ENCODE measurements at regions of chr20 and their contacts with region 1.

Region 1: GRCh38 chr20:54219751-54220426 is 12.0 kb downstream of the PFDN4 start:
- DNase-seq: peak; percentile 46 to 60
- ATAC-seq: peak in 1 of 2 experiments; percentile 65; a peak in 2 of 6 replicates
- H3K4me3 ChIP-seq: no peak overlapping the region
- H3K27ac ChIP-seq: no peak overlapping the region
- H3K4me1 ChIP-seq: no peaks in the 10 kb centered on the region; the same call in 2 of the 3 replicates
- CTCF ChIP-seq: peak; percentile 87
- EP300 ChIP-seq: no peak
- POLR2A ChIP-seq: no peak
- RAD21 ChIP-seq: peak; percentile 78 to 84

Region 2: GRCh38 chr20:54207743-54208547 is 11.9 kb before region 1 on chr20 and contains the start of gene PFDN4:
- CTCF ChIA-PET with region 1: interaction called, 10 read pairs
- POLR2A ChIA-PET with region 1: no interaction called
- DNase-seq: peak; percentile 89 to 93
- ATAC-seq: peak; percentile 96 to 98
- H3K4me3 ChIP-seq: peak within 1 kb of the TSS; percentile 69
- H3K27ac ChIP-seq: peak within 1 kb of the TSS; percentile 97 to 99
- H3K4me1 ChIP-seq: peaks cover 13% of the 10 kb centered on the region
- CTCF ChIP-seq: peak; percentile 80
- EP300 ChIP-seq: no peak
- POLR2A ChIP-seq: peak; percentile 42; the same call in 1 of the 2 replicates
- RAD21 ChIP-seq: peak; percentile 43 to 45; a peak in 4 of 5 replicates
- polyA plus RNA-seq, gene PFDN4: 78.7 and 146 TPM in 2 replicates

Region 3: GRCh38 chr20:54643791-54644190 is 423.9 kb after region 1 on chr20:
- CTCF ChIA-PET with region 1: interaction called, 31 read pairs
- POLR2A ChIA-PET with region 1: interaction called, 6 read pairs
- DNase-seq: no peak
- ATAC-seq: no peak
- H3K4me3 ChIP-seq: no peak overlapping the region
- H3K27ac ChIP-seq: no peak overlapping the region
- H3K4me1 ChIP-seq: peaks cover 11% of the 10 kb centered on the region; the same call in 2 of the 3 replicates
- CTCF ChIP-seq: no peak
- EP300 ChIP-seq: no peak
- POLR2A ChIP-seq: no peak
- RAD21 ChIP-seq: no peak

Region 4: DNA sequence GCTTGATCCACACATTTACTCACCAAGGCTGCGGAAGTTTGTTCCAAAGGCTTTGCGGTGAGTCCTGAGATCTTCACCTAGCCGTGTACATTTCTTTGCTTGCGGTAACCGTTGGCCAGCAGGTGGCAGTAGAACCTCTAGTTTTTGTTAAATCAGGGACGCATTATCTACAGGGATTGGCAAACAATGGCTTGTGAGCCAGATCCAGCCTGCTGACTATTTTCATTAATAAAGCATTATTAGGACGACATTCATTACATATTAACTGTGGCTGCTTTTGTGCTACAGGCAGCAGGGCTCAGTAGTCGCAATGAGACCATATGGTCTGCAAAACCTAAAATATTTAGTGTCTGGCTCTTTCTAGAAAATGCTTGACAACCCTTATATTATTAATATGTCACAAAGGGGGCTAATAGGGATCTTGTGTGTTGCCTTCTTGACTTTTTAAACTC is 429.6 kb after region 1 on chr20:
- CTCF ChIA-PET with region 1: interaction called, 31 read pairs
- POLR2A ChIA-PET with region 1: interaction called, 6 read pairs
- DNase-seq: peak; percentile 58 to 75
- ATAC-seq: peak; percentile 89 to 95; a peak in 5 of 6 replicates
- H3K4me3 ChIP-seq: no peak overlapping the region
- H3K27ac ChIP-seq: no peak overlapping the region
- H3K4me1 ChIP-seq: peaks cover 11% of the 10 kb centered on the region; the same call in 2 of the 3 replicates
- CTCF ChIP-seq: peak; percentile 73
- EP300 ChIP-seq: no peak
- POLR2A ChIP-seq: no peak
- RAD21 ChIP-seq: peak; percentile 65

Measured in A549 (cell line).